ENCODE measurements at regions of chr6 and their contacts with region 1.

Region 1: GRCh38 chr6:80106418-80107235 is at the start of gene BCKDHB:
- DNase-seq: peak; percentile 96 to 99
- H3K4me3 ChIP-seq: peak within 1 kb of the TSS; percentile 86 to 96
- H3K27ac ChIP-seq: peak within 1 kb of the TSS; percentile 85 to 91
- H3K4me1 ChIP-seq: peaks cover 0 to 6% of the 10 kb centered on the region in 2 donors
- H3K27me3 ChIP-seq: no peaks in the 10 kb centered on the region
- CTCF ChIP-seq: peak in 1 of 3 experiments; percentile 6
- total RNA-seq, gene BCKDHB: 14.3 TPM

Region 2: GRCh38 chr6:79536954-79537747 is 569.5 kb before region 1 on chr6 and contains the start of gene LCA5:
- intact Hi-C with region 1: loop called (anchors 10 kb)
- DNase-seq: peak; percentile 82 to 96
- H3K4me3 ChIP-seq: peak within 1 kb of the TSS; percentile 78 to 88
- H3K27ac ChIP-seq: peak within 1 kb of the TSS; percentile 89 to 93
- H3K4me1 ChIP-seq: no peaks in the 10 kb centered on the region
- H3K27me3 ChIP-seq: no peaks in the 10 kb centered on the region
- CTCF ChIP-seq: no peak
- total RNA-seq, gene LCA5: 7.2 TPM

Region 3: GRCh38 chr6:79949233-79949632 is 157.4 kb before region 1 on chr6:
- intact Hi-C with region 1: loop called (anchors 1 kb)
- DNase-seq: peak in 1 of 2 donors; percentile 71
- H3K4me3 ChIP-seq: no peak overlapping the region
- H3K27ac ChIP-seq: no peak overlapping the region
- H3K4me1 ChIP-seq: peaks cover 0 to 3% of the 10 kb centered on the region in 2 donors
- H3K27me3 ChIP-seq: no peaks in the 10 kb centered on the region
- CTCF ChIP-seq: peak; percentile 32 to 51 (median 43)

Region 4: DNA sequence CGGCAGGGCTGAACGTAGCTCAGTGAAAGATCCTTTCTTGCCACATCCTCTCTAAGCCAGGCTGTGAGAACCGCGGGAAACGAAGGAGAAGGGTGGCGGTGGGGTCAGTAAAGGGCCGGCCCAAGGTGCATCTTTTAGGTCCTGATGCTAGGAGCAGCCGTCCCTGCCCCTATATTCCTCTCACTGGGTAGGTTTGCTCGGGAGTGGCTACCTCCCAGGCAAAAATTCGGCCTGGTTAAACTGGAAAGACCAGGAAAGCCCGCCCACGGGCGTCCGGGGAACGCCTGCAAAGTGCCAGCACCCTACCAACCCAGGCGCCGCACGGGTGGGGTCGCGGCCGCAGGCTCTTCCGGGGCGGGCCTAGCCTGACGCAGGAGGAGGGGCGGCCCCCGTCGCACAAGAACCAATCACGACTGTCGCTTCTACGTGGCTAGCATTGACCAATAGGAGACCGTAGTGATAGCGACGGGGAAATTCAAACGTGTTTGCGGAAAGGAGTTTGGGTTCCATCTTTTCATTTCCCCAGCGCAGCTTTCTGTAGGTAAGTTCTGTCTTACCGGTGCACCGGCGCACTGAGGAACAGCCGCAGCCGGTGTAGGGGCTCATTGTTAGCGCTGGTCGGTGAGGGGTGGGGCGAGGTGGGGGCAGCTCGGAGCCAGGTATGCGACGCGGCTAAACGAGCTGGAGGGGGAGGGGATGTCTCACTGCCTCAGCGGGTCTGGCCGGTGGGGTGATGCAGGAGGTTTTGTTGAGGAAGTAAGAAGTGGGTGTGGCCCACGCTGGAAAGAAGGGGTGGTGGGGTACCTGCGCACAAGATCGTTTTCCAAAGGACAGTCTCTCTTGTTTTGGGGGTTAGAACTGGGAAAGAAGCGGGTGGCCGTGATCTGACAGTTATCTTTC is 102.2 kb before region 1 on chr6 and contains the start of gene TTK:
- intact Hi-C with region 1: loop called (anchors 1 kb)
- DNase-seq: peak; percentile 74 to 95
- H3K4me3 ChIP-seq: peak within 1 kb of the TSS; percentile 73 to 81
- H3K27ac ChIP-seq: peak within 1 kb of the TSS; percentile 75 to 91
- H3K4me1 ChIP-seq: peaks cover 0 to 9% of the 10 kb centered on the region in 2 donors
- H3K27me3 ChIP-seq: no peaks in the 10 kb centered on the region
- CTCF ChIP-seq: no peak
- total RNA-seq, gene TTK: not detected

Region 5: DNA sequence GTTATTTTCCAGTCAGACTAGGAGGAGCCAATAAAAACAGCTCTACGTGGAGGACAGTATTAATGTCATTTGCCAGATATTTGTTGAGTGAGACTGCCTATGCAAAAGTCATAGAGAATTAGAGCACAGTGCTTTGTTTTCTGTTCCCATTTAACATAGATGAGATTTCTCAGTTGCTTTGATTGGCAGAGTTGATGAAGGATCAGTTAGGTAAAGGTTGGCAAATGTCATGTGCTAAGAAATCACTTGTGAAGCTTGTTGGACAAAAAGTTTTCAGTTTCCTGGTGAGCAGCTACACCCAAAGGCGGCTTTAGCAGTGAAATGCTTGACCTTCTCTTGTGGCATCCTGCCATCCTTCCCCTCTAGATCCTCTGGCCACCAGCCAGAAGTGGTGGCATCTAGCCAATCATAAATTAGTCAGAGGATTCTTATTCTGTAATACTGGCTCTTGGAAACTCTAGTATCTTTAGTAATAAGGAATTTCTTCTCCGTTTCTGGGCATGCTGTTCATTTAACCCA is 36.9 kb after region 1 on chr6:
- intact Hi-C with region 1: loop called (anchors 2 kb)
- DNase-seq: peak in 1 of 2 donors; percentile 93
- H3K4me3 ChIP-seq: peak overlapping the region in 1 of 2 donors; percentile 28
- H3K27ac ChIP-seq: peak overlapping the region; percentile 51 to 74
- H3K4me1 ChIP-seq: peaks cover 5 to 26% of the 10 kb centered on the region in 2 donors
- H3K27me3 ChIP-seq: no peaks in the 10 kb centered on the region
- CTCF ChIP-seq: no peak

Region 6: DNA sequence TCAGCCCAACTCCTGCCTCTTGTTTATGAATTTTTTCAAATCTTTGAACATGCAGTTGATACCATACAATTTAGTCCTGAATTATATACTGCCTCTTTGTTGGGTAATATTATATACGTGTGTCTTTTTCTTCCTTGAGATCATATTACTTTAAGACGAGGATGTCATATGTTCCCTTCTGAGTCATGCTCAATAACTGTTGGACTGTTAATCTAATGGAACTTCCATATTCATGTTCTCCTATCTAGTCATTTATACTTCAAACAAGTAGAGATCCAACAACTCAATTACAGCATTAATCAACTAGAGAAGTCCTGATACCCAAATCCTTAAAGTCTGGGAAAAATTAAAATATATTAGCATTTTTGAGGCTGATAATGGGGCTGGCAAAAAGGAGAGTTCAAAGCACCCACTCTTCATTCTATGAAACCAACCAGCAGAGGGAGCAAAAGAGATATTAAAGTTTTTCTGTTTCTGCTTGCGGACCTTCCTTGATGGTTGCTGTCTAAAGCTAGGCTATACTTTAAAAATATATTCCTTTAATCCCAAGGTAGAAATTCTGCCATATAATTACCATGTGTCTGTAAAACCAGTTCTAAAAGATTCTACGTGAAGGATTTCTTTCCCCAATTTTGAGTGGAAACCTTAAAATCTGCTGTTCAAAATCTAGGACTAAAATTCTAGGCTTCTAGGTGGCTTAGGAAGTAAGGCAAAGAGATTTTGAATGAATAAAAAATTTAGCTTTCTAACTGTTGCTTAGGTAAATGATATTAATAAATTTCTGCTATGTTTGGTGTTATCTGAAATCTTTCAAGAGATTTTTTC is 498.8 kb after region 1 on chr6:
- intact Hi-C with region 1: loop called (anchors 10 kb)
- DNase-seq: no peak
- H3K4me3 ChIP-seq: no peak overlapping the region
- H3K27ac ChIP-seq: no peak overlapping the region
- H3K4me1 ChIP-seq: peaks cover 0 to 14% of the 10 kb centered on the region in 2 donors
- H3K27me3 ChIP-seq: no peaks in the 10 kb centered on the region
- CTCF ChIP-seq: peak; percentile 8 to 62 (median 43)